ENCODE measurements at regions of chr3 and their contacts with region 1.

Region 1: GRCh38 chr3:39000008-39000450 is 51.7 kb downstream of the SCN11A start:
- DNase-seq: peak; percentile 60 to 74
- ATAC-seq: peak; percentile 85 to 90
- H3K4me3 ChIP-seq: no peak overlapping the region
- H3K27ac ChIP-seq: no peak overlapping the region
- H3K4me1 ChIP-seq: no peaks in the 10 kb centered on the region
- CTCF ChIP-seq: peak; percentile 96
- EP300 ChIP-seq: no peak
- POLR2A ChIP-seq: no peak
- RAD21 ChIP-seq: peak; percentile 83 to 87

Region 2: GRCh38 chr3:38496131-38496910 is 503.7 kb before region 1 on chr3 and contains the start of gene EXOG:
- CTCF ChIA-PET with region 1: interaction called, 18 read pairs
- POLR2A ChIA-PET with region 1: no interaction called
- DNase-seq: peak; percentile 93 to 98
- ATAC-seq: peak; percentile 96 to 99
- H3K4me3 ChIP-seq: peak within 1 kb of the TSS; percentile 64
- H3K27ac ChIP-seq: peak within 1 kb of the TSS; percentile 79 to 87
- H3K4me1 ChIP-seq: peaks cover 6% of the 10 kb centered on the region; the same call in 1 of the 3 replicates
- CTCF ChIP-seq: peak; percentile 79
- EP300 ChIP-seq: no peak
- POLR2A ChIP-seq: peak; percentile 54
- RAD21 ChIP-seq: peak; percentile 55 to 70
- polyA plus RNA-seq, gene EXOG: 16.6 and 17.1 TPM in 2 replicates

Region 3: DNA sequence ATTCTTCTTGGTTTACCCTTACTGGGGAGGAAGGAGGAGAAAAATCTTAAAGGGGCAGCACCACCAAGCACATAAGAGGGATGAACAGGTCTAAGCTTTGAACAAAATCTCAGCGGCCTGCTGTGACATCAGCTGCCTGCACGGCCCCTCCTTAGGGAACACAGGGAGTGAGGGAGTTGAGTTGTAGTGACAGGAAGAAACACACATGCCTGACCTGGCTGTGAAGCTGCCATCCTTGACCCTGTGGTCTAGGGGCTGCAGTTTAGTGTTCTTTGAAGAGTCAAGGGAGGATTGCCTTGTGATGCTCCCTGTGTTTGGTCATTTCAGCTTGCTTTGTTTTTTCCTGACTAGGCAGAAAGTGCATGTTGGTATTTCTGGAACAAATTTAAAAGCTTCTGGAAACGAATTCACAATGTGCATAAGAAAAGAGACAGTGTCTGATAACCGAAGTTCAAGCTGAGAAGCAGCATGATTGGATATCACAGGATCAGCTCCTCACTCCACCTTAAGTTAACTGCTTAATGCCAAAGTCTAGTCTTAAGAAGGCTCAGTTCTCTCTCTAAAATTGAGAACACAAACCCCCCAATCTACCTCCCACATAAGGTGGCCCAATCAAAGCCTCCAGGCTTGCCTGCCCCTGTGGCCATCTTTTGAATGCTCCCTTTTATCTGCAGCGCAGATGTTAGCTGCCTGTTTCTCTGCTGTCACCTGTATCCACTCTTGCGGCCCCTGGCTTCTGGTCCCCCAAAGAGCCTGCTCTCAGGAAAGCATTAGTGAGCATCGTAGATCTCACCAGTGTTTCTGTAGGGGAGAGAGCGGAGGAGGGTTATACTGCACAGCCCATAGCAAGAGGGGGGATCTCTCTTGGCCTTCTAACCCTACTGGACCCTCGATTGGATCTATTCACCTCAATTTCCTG is 30.5 kb before region 1 on chr3:
- CTCF ChIA-PET with region 1: interaction called, 18 read pairs
- POLR2A ChIA-PET with region 1: no interaction called
- DNase-seq: no peak
- ATAC-seq: no peak
- H3K4me3 ChIP-seq: no peak overlapping the region
- H3K27ac ChIP-seq: no peak overlapping the region
- H3K4me1 ChIP-seq: no peaks in the 10 kb centered on the region
- CTCF ChIP-seq: no peak
- EP300 ChIP-seq: no peak
- POLR2A ChIP-seq: no peak
- RAD21 ChIP-seq: no peak

Region 4: GRCh38 chr3:39013289-39013688 is 13.3 kb after region 1 on chr3:
- CTCF ChIA-PET with region 1: interaction called, 12 read pairs
- POLR2A ChIA-PET with region 1: no interaction called
- DNase-seq: no peak
- ATAC-seq: no peak
- H3K4me3 ChIP-seq: no peak overlapping the region
- H3K27ac ChIP-seq: no peak overlapping the region
- H3K4me1 ChIP-seq: no peaks in the 10 kb centered on the region
- CTCF ChIP-seq: no peak
- EP300 ChIP-seq: no peak
- POLR2A ChIP-seq: no peak
- RAD21 ChIP-seq: no peak

Region 5: DNA sequence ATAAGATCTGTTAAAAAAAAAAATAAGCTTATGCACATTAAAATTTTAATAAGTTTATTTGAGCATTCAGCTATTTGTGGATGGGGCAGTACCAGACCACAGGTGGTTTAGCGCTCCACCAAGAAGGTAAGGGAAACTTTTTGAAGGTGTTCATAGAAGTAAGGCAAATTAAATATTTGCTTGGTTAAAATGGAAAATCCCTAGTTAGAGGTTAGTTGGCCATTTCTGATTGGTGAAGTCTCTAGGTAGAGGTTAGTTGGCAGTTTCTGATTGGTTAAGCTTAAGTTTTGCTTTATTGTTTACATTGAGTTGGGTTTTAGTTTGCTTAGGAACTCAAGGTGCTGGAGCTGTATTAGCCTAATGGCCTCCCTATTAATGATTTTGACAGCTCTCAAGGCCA is 21.0 kb after region 1 on chr3:
- CTCF ChIA-PET with region 1: interaction called, 14 read pairs
- POLR2A ChIA-PET with region 1: no interaction called
- DNase-seq: no peak
- ATAC-seq: no peak
- H3K4me3 ChIP-seq: no peak overlapping the region
- H3K27ac ChIP-seq: no peak overlapping the region
- H3K4me1 ChIP-seq: no peaks in the 10 kb centered on the region
- CTCF ChIP-seq: no peak
- EP300 ChIP-seq: no peak
- POLR2A ChIP-seq: no peak
- RAD21 ChIP-seq: no peak